Heart right ventricle (tissue), 16 donors: ENCODE measurements at regions of chr3 and their contacts with region 1.

Region 1: GRCh38 chr3:80542456-80542855 is 774.7 kb upstream of the ROBO1 start:
- DNase-seq: no peak
- ATAC-seq: no peak
- H3K4me3 ChIP-seq: no peak overlapping the region
- H3K27ac ChIP-seq: no peak overlapping the region
- H3K4me1 ChIP-seq: no peaks in the 10 kb centered on the region
- H3K27me3 ChIP-seq: no peaks in the 10 kb centered on the region
- CTCF ChIP-seq: no peak

Region 2: GRCh38 chr3:80526153-80526552 is 16.3 kb before region 1 on chr3:
- intact Hi-C with region 1: no loop called
- DNase-seq: no peak
- ATAC-seq: no peak
- H3K4me3 ChIP-seq: no peak overlapping the region
- H3K27ac ChIP-seq: no peak overlapping the region
- H3K4me1 ChIP-seq: no peaks in the 10 kb centered on the region
- H3K27me3 ChIP-seq: no peaks in the 10 kb centered on the region
- CTCF ChIP-seq: no peak

Region 3: GRCh38 chr3:80564391-80564790 is 21.9 kb after region 1 on chr3:
- intact Hi-C with region 1: loop called in 1 of 10 experiments (anchors 2 kb)
- DNase-seq: no peak
- ATAC-seq: no peak
- H3K4me3 ChIP-seq: no peak overlapping the region
- H3K27ac ChIP-seq: no peak overlapping the region
- H3K4me1 ChIP-seq: no peaks in the 10 kb centered on the region
- H3K27me3 ChIP-seq: no peaks in the 10 kb centered on the region
- CTCF ChIP-seq: no peak